GM12878 (cell line): ENCODE measurements at regions of chr21 and their contacts with region 1.

Region 1: DNA sequence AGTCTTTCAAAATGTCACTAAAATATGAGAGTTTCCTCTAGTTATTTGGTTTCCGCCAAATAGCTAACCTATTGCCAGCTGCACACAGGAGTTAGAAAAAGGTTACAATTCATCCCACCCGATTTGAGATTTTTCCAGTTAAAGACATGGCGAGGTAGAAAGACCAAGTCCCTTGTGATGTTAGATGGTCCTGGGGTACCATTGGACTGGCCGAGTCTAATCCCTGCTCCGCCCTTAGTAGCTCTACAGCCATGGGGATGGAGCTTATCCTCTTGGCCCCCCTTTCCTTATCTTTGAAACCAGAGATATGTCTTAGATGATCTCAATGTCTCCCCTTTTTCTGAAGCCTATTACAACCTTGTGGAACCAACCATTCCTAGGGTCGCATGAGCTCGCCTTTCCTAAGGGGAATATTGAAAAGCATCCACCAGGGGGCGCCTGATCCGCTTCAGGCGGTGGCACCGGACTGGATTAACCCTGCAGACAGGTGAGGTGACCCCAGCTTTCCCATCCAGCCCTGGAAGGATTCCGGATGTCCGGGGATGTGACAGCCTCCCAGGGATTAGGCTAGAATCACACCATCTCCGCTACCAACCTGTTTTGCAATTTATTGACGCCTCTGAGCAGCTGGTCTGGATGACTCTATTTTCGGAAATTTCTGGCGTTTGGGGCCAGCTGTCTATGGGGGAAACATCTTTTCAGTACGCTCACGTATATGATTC is 68.3 kb upstream of the SIM2 start:
- DNase-seq: no peak
- ATAC-seq: peak; percentile 89
- H3K4me3 ChIP-seq: no peak overlapping the region
- H3K27ac ChIP-seq: no peak overlapping the region
- H3K4me1 ChIP-seq: no peaks in the 10 kb centered on the region
- H3K27me3 ChIP-seq: no peaks in the 10 kb centered on the region
- CTCF ChIP-seq: peak; percentile 59 to 78 (median 70)
- EP300 ChIP-seq: no peak
- POLR2A ChIP-seq: no peak
- RAD21 ChIP-seq: peak; percentile 61

Region 2: DNA sequence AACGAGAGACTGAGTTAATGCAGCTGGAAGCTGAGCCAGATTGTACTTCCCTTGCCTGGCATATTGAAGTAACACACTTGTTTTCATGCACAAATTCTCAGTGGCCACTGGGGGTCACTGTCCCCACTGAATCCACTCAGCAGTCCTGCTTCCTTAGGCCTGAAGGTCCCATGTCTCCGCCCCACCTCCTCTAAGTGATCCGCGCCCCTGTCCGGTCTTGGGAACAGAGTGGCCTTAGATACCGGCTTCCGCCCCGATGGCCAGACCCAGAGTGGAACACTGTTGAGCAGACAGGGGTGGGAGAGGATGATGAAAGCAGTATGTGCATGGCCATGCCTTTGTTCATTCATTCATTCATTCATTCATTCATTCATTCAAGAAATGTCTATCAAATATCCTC is 210.7 kb before region 1 on chr21:
- CTCF ChIA-PET with region 1: interaction called, 11 read pairs
- POLR2A ChIA-PET with region 1: no interaction called
- RAD21 ChIA-PET with region 1: no interaction called
- SMC1A ChIA-PET with region 1: interaction called, 5 read pairs
- in situ Hi-C with region 1: no loop called
- intact Hi-C with region 1: no loop called
- DNase-seq: no peak
- ATAC-seq: peak; percentile 93
- H3K4me3 ChIP-seq: no peak overlapping the region
- H3K27ac ChIP-seq: no peak overlapping the region
- H3K4me1 ChIP-seq: no peaks in the 10 kb centered on the region
- H3K27me3 ChIP-seq: no peaks in the 10 kb centered on the region
- CTCF ChIP-seq: peak; percentile 76 to 90 (median 78)
- EP300 ChIP-seq: no peak
- POLR2A ChIP-seq: no peak
- RAD21 ChIP-seq: peak; percentile 78

Region 3: GRCh38 chr21:36640721-36641244 is 10.1 kb after region 1 on chr21:
- CTCF ChIA-PET with region 1: interaction called, 19 read pairs
- POLR2A ChIA-PET with region 1: no interaction called
- RAD21 ChIA-PET with region 1: no interaction called
- SMC1A ChIA-PET with region 1: interaction called, 3 read pairs
- in situ Hi-C with region 1: no loop called
- intact Hi-C with region 1: no loop called
- DNase-seq: no peak
- ATAC-seq: no peak
- H3K4me3 ChIP-seq: no peak overlapping the region
- H3K27ac ChIP-seq: no peak overlapping the region
- H3K4me1 ChIP-seq: no peaks in the 10 kb centered on the region
- H3K27me3 ChIP-seq: no peaks in the 10 kb centered on the region
- CTCF ChIP-seq: no peak
- EP300 ChIP-seq: no peak
- POLR2A ChIP-seq: no peak
- RAD21 ChIP-seq: no peak

Region 4: GRCh38 chr21:36854391-36854790 is 223.7 kb after region 1 on chr21:
- CTCF ChIA-PET with region 1: interaction called, 34 read pairs
- POLR2A ChIA-PET with region 1: no interaction called
- RAD21 ChIA-PET with region 1: interaction called, 8 read pairs
- SMC1A ChIA-PET with region 1: interaction called, 14 read pairs
- in situ Hi-C with region 1: no loop called
- intact Hi-C with region 1: loop called (anchors 5 kb)
- DNase-seq: no peak
- ATAC-seq: peak; percentile 83
- H3K4me3 ChIP-seq: no peak overlapping the region
- H3K27ac ChIP-seq: no peak overlapping the region
- H3K4me1 ChIP-seq: no peaks in the 10 kb centered on the region
- H3K27me3 ChIP-seq: no peaks in the 10 kb centered on the region
- CTCF ChIP-seq: peak; percentile 51 to 61 (median 53)
- EP300 ChIP-seq: no peak
- POLR2A ChIP-seq: no peak
- RAD21 ChIP-seq: peak; percentile 65

Region 5: GRCh38 chr21:36927719-36928117 is 297.1 kb after region 1 on chr21:
- CTCF ChIA-PET with region 1: interaction called, 27 read pairs
- POLR2A ChIA-PET with region 1: no interaction called
- RAD21 ChIA-PET with region 1: interaction called, 6 read pairs
- SMC1A ChIA-PET with region 1: interaction called, 7 read pairs
- in situ Hi-C with region 1: loop called (anchors 5 kb)
- intact Hi-C with region 1: loop called (anchors 1 kb)
- DNase-seq: peak; percentile 12
- ATAC-seq: peak; percentile 98
- H3K4me3 ChIP-seq: no peak overlapping the region
- H3K27ac ChIP-seq: no peak overlapping the region
- H3K4me1 ChIP-seq: no peaks in the 10 kb centered on the region
- H3K27me3 ChIP-seq: no peaks in the 10 kb centered on the region
- CTCF ChIP-seq: peak; percentile 86 to 92 (median 89)
- EP300 ChIP-seq: no peak
- POLR2A ChIP-seq: no peak
- RAD21 ChIP-seq: peak; percentile 94